ENCODE measurements at regions of chr1 and their contacts with region 1.

Region 1: DNA sequence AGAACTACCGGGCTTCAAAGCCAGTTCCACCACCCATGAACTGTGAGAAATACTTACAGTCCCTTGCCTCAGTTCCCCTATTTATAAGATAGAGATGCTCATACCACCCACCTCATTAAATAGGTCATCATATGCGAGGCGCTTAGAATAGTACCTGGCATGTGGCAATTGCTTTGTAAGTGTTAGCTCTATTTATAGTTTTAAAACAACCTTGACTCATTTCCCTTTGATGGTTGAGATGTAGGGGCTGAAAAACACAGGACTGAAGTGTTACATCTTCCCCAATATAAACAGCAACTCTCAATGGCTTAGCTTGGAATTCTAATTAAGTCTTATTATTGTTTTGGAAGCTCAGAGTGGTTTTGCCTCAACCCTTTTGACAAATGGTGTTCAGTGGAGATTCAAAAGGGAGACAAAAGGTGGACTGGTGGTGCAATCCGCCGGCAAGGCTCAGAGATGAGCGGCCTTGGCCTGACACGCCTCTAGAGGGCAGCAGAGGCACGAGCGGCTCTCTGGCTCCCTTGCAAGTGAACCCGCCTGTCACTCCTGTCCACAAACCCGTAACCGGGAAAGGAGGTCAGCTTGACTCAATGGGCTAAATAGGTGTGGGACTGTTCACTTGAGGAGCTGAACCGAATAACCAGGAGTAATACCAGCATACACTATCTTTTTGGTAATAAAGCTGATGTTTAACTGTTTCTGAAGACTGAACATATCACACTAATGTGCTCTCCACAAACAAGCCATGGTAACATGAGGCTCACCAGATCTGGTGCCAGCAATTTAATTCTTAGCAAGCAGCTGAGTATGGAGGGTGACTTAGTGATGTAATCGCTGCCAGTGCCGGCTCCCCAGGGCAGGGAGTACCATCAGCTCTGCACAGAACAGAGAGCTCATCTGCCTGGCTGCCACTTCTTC is 19.5 kb upstream of the SMYD2 start:
- DNase-seq: peak; percentile 91
- H3K4me3 Mint-ChIP-seq: no peak overlapping the region
- H3K27ac Mint-ChIP-seq: no peak overlapping the region
- H3K4me1 Mint-ChIP-seq: peaks cover 11% of the 10 kb centered on the region
- H3K27me3 Mint-ChIP-seq: peaks cover 46% of the 10 kb centered on the region

Region 2: DNA sequence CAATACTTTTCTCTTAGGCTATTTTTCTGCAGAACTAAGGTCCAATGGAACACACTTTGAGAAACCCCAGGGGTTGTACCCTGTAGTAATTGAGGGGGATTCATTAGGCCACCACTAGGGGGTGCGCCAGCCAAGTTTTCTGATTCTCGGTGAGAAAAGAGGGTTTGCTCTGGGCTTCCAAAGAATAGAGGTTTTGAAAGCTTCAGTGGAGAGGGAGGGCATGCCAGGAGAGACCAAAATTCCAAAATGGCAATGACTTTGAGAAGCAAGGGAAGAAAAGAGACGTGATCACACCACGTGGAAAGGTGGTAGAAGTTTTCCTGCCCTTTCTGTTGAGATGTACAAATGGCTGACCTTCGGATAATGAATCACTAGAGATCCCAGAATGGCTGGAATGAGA is 887.1 kb before region 1 on chr1:
- CTCF ChIA-PET with region 1: no interaction called
- intact Hi-C with region 1: loop called (anchors 1 kb)
- DNase-seq: peak; percentile 78
- H3K4me3 Mint-ChIP-seq: no peak overlapping the region
- H3K27ac Mint-ChIP-seq: no peak overlapping the region
- H3K4me1 Mint-ChIP-seq: no peaks in the 10 kb centered on the region
- H3K27me3 Mint-ChIP-seq: no peaks in the 10 kb centered on the region

Region 3: GRCh38 chr1:214192825-214193643 is 68.4 kb before region 1 on chr1:
- CTCF ChIA-PET with region 1: no interaction called
- intact Hi-C with region 1: no loop called
- DNase-seq: no peak
- H3K4me3 Mint-ChIP-seq: no peak overlapping the region
- H3K27ac Mint-ChIP-seq: no peak overlapping the region
- H3K4me1 Mint-ChIP-seq: peaks cover under 1% of the 10 kb centered on the region
- H3K27me3 Mint-ChIP-seq: peaks cover 36% of the 10 kb centered on the region

Region 4: GRCh38 chr1:214248311-214249085 is 13.0 kb before region 1 on chr1:
- CTCF ChIA-PET with region 1: interaction called, 17 read pairs
- intact Hi-C with region 1: no loop called
- DNase-seq: no peak
- H3K4me3 Mint-ChIP-seq: no peak overlapping the region
- H3K27ac Mint-ChIP-seq: no peak overlapping the region
- H3K4me1 Mint-ChIP-seq: no peaks in the 10 kb centered on the region
- H3K27me3 Mint-ChIP-seq: peaks cover 2% of the 10 kb centered on the region

Region 5: GRCh38 chr1:214289574-214290272 is 28.3 kb after region 1 on chr1:
- CTCF ChIA-PET with region 1: interaction called, 11 read pairs
- intact Hi-C with region 1: no loop called
- DNase-seq: no peak
- H3K4me3 Mint-ChIP-seq: no peak overlapping the region
- H3K27ac Mint-ChIP-seq: no peak overlapping the region
- H3K4me1 Mint-ChIP-seq: peaks cover 26% of the 10 kb centered on the region
- H3K27me3 Mint-ChIP-seq: no peaks in the 10 kb centered on the region

Region 6: DNA sequence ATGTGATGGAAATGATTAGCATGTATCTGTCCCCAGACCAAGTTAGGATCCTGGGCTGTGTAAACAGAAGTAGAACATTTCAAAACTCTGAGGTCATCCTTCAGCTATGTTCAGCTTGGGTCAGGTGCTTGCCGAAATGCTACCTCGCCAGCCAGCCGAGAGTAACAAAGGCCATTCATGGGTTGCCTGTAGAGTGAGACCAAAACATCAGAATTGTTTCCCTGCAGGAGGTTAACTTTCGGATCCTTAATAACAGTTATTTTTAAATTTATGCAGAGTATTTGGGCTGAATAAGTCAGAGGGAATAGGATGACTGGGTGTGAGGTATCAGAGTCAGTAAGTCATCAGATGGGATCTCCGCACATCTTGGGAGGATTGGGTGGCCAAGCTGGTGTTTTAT is 55.1 kb after region 1 on chr1:
- CTCF ChIA-PET with region 1: interaction called, 24 read pairs
- intact Hi-C with region 1: no loop called
- DNase-seq: no peak
- H3K4me3 Mint-ChIP-seq: no peak overlapping the region
- H3K27ac Mint-ChIP-seq: no peak overlapping the region
- H3K4me1 Mint-ChIP-seq: peaks cover 2% of the 10 kb centered on the region
- H3K27me3 Mint-ChIP-seq: no peaks in the 10 kb centered on the region

Region 7: DNA sequence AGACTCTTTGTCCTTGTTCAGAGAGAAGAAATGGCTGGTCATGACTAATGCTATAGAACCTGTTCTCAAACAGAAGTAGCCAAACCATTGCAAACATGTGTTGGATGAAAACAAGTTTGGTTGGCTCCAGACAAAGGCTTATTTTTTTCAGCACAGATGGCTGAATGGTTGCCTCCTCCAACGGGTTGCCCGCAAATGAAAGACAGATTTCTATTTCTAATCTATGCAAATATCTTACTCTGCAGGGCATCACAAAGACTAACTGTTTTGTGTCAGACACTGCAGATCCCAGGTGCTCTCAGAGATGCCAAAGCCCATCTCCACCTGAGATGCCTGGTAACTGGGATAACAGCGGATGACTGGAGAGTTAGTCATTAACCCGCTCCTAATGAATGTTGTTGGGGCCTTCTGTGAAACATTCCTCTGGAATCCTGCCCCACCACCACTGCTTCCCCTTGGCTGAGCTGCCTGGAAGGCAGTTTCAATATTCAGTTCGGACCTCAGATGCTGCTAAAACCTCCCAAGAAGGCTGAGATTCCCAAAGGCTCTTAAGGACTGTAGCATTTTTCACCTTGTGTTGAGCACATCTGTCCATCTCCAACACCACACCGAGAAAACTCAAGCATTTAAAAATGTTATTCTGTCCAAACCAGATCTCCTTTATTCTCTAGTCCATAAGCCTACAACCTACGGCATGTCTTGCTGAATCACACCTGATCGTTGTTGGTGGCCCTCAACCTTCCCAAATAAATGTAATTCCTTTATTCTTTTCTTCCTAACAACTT is 185.5 kb after region 1 on chr1:
- CTCF ChIA-PET with region 1: no interaction called
- intact Hi-C with region 1: loop called (anchors 5 kb)
- DNase-seq: no peak
- H3K4me3 Mint-ChIP-seq: no peak overlapping the region
- H3K27ac Mint-ChIP-seq: peak overlapping the region; percentile 16
- H3K4me1 Mint-ChIP-seq: peaks cover 32% of the 10 kb centered on the region
- H3K27me3 Mint-ChIP-seq: peaks cover 2% of the 10 kb centered on the region

Region 8: GRCh38 chr1:214602764-214603657 is 341.5 kb after region 1 on chr1 and contains the start of gene CENPF:
- CTCF ChIA-PET with region 1: no interaction called
- intact Hi-C with region 1: loop called (anchors 5 kb)
- DNase-seq: peak; percentile 97
- H3K4me3 Mint-ChIP-seq: peak within 1 kb of the TSS; percentile 97
- H3K27ac Mint-ChIP-seq: peak within 1 kb of the TSS; percentile 90
- H3K4me1 Mint-ChIP-seq: peaks cover 8% of the 10 kb centered on the region
- H3K27me3 Mint-ChIP-seq: no peaks in the 10 kb centered on the region
- total RNA-seq, gene CENPF: 116 to 128 TPM

Measured in activated naive CD4-positive, alpha-beta T cell treated with anti-CD3 and anti-CD28 coated beads for 36 hours (primary cell).